B cell (primary cell): ENCODE measurements at regions of chr6 and their contacts with region 1.

Region 1: GRCh38 chr6:68317366-68317765 is 317.7 kb upstream of the ADGRB3 start:
- DNase-seq: no peak
- ATAC-seq: no peak
- H3K4me3 ChIP-seq: no peak overlapping the region
- H3K4me3 Mint-ChIP-seq: no peak overlapping the region
- H3K27ac ChIP-seq: no peak overlapping the region
- H3K27ac Mint-ChIP-seq: no peak overlapping the region
- H3K4me1 ChIP-seq: no peaks in the 10 kb centered on the region
- H3K4me1 Mint-ChIP-seq: no peaks in the 10 kb centered on the region
- H3K27me3 ChIP-seq: no peaks in the 10 kb centered on the region
- H3K27me3 Mint-ChIP-seq: no peaks in the 10 kb centered on the region
- CTCF ChIP-seq: no peak

Region 2: GRCh38 chr6:68273297-68273696 is 44.1 kb before region 1 on chr6:
- CTCF ChIA-PET with region 1: no interaction called
- POLR2A ChIA-PET with region 1: no interaction called
- intact Hi-C with region 1: loop called (anchors 2 kb)
- DNase-seq: no peak
- ATAC-seq: no peak
- H3K4me3 ChIP-seq: no peak overlapping the region
- H3K4me3 Mint-ChIP-seq: no peak overlapping the region
- H3K27ac ChIP-seq: no peak overlapping the region
- H3K27ac Mint-ChIP-seq: no peak overlapping the region
- H3K4me1 ChIP-seq: no peaks in the 10 kb centered on the region
- H3K4me1 Mint-ChIP-seq: no peaks in the 10 kb centered on the region
- H3K27me3 ChIP-seq: no peaks in the 10 kb centered on the region
- H3K27me3 Mint-ChIP-seq: no peaks in the 10 kb centered on the region
- CTCF ChIP-seq: no peak

Region 3: DNA sequence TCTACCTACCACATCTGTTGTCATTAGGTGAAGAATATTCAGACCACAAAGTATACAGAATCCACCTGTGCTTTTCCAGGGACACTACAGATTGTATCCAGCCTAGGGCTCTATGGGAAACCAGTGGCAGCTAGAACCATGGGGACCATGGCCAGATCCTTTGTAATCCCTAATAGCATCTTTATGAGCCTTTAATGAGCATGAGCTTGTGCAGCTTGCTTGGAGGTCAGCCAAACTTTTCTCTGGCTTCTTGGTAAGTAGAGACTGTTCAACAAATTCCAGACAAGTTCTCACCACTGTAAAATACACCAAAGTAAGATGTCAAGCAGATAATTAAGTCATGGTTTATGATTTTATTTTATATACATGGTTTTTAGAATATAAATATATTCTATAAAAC is 16.1 kb after region 1 on chr6:
- CTCF ChIA-PET with region 1: no interaction called
- POLR2A ChIA-PET with region 1: no interaction called
- intact Hi-C with region 1: no loop called
- DNase-seq: no peak
- ATAC-seq: no peak
- H3K4me3 ChIP-seq: no peak overlapping the region
- H3K4me3 Mint-ChIP-seq: no peak overlapping the region
- H3K27ac ChIP-seq: no peak overlapping the region
- H3K27ac Mint-ChIP-seq: no peak overlapping the region
- H3K4me1 ChIP-seq: no peaks in the 10 kb centered on the region
- H3K4me1 Mint-ChIP-seq: no peaks in the 10 kb centered on the region
- H3K27me3 ChIP-seq: no peaks in the 10 kb centered on the region
- H3K27me3 Mint-ChIP-seq: no peaks in the 10 kb centered on the region
- CTCF ChIP-seq: no peak